WTC11 (cell line): ENCODE measurements at regions of chr1 and their contacts with region 1.

Region 1: DNA sequence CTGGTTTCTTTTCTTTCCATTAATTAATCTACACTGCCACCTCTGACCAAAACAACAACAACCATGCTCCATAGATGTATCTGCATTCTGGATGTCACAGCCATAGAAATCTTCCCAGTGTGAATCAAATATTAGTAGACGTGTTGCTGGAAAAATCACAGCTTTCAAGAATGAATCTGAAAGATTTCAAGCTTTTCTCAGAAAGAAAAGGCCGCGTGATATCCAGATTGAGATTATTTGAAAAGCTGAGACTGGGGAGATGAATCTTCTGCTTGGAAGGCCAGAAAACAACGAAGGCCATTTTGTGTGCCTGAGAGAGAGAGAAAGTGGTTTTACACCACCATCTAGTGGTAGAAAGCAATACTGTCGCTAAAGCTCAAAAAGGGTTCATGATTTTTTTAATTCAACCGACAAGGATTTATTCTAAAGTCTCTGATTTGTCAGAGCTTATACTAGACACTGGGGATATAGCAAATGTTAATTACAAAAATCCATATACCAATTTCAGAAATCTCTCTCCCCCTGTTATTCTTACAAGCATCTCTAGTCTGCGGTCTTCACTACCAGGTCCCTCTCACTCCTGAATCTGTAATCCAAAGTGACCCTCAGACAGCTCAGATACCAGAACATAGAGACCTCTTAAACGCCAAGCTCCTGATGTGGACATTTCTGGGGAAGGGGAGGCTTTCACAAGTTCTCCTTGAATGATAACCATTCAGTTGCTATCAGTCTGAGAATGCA is 87.5 kb upstream of the SGIP1 start:
- DNase-seq: no peak
- ATAC-seq: peak; percentile 71
- H3K4me3 Mint-ChIP-seq: no peak overlapping the region; the same call in 1 of the 2 replicates
- H3K27ac Mint-ChIP-seq: no peak overlapping the region
- H3K4me1 Mint-ChIP-seq: peaks cover 16% of the 10 kb centered on the region
- H3K27me3 Mint-ChIP-seq: no peaks in the 10 kb centered on the region
- CTCF ChIP-seq: peak; percentile 67; the same call in 1 of the 2 replicates

Region 2: DNA sequence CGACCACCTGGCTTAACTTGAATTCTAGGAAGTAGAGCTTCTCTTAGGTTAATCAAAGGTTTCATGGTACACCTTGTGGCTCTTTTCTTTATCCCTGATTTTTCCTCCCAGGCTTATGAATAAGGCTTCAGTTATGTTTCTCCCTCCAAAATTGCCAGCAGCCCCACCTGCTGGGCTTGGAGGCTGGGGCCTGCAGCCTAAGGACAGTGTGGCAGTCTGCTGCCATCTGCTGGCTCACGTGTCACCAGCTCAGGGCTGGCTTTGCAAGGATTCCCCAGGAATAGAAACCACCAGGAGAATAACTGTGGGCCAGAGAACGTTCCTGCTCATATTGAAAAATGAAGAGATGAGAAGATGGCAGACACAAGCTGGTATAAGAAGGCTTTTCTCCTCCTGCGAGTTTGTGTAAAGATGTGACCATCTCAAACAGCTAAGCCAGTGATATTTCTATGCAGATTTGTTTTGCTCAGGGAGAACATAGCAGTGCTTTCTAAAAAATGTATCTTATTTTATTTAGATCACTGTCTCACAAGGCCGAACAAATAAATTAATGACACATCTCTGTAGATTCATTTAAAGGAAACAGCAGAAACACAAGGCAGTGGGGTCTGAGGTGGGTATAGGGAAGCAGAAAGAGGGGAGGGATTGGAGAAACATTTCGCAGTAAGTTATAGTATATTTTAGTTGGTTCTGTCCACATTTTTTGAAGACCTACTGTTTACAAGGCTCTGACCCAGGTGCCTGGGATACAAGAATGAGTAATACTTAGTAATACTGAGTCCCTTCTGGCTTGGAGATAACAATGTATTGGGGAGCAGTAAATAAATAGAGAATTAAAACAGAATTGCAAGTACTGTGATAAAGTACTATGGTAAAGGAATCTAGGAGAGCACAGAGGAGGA is 203.5 kb before region 1 on chr1:
- CTCF ChIA-PET with region 1: interaction called, 39 read pairs
- POLR2A ChIA-PET with region 1: no interaction called
- DNase-seq: peak; percentile 83
- ATAC-seq: peak; percentile 95
- H3K4me3 Mint-ChIP-seq: no peak overlapping the region
- H3K27ac Mint-ChIP-seq: no peak overlapping the region
- H3K4me1 Mint-ChIP-seq: peaks cover 3% of the 10 kb centered on the region; the same call in 1 of the 2 replicates
- H3K27me3 Mint-ChIP-seq: no peaks in the 10 kb centered on the region
- CTCF ChIP-seq: peak; percentile 76

Region 3: DNA sequence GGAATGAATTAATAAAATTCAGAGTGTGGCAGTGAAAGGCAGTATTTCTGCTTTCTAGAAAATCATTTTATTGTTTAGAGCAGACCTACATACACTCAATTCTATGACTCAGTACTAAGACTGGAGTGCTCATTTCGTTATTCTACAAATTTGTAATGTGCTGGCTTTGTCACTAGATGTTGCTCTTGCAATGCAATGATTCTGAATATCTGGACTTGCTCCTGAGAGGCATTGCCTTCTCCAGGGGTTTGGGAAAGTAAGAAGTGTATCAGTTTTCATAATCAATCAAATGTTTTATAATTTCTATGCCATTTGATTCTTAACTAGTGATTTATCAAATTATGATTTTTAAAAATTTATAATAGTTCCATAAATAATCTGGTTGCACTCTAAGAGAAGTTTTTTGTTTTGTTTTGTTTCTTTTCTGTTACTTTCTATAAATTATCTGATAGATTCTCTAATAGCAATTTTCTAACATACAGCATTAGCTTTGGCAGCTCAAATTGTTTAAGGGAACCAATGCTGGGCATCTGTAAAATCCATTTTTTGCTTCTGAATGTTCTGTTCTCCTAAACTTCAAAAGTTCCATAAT is 193.0 kb before region 1 on chr1:
- CTCF ChIA-PET with region 1: interaction called, 52 read pairs
- POLR2A ChIA-PET with region 1: no interaction called
- DNase-seq: no peak
- ATAC-seq: peak; percentile 74
- H3K4me3 Mint-ChIP-seq: no peak overlapping the region
- H3K27ac Mint-ChIP-seq: no peak overlapping the region
- H3K4me1 Mint-ChIP-seq: peaks cover 44% of the 10 kb centered on the region
- H3K27me3 Mint-ChIP-seq: no peaks in the 10 kb centered on the region
- CTCF ChIP-seq: no peak

Region 4: DNA sequence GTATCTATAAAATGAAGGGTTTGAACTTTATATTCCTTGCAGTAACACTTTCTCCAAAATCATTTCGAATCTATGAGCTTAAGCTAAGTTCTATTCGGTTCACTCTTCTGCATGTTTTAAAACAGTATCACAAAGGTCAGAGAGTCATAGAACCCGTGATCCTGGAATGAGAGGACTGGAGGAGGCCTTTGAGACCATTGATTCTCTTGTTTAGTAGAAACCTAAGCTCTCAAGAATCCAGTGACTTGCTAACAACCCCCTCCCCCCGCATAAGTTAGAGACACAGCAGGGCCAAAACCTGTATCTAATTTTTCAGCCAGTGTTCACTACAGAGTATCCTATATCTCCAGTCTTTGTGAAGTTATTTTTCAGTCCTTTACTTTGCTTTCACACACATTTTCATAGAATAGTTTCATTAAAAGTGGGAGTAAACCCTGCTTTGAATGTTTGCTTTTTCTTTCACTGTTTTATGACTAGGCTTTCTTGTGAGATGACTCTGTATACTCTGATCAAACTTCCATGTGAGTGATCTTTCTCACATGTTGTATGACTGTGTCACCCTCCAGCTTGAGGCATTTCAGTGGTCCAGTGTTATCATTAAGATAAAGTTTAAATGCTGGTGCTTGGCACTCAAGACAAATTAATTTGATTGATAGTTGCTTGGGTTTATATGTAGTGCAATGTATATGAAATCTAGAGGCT is 187.9 kb before region 1 on chr1:
- CTCF ChIA-PET with region 1: interaction called, 26 read pairs
- POLR2A ChIA-PET with region 1: no interaction called
- DNase-seq: no peak
- ATAC-seq: peak; percentile 68
- H3K4me3 Mint-ChIP-seq: no peak overlapping the region
- H3K27ac Mint-ChIP-seq: no peak overlapping the region
- H3K4me1 Mint-ChIP-seq: peaks cover 33% of the 10 kb centered on the region
- H3K27me3 Mint-ChIP-seq: peaks cover 7% of the 10 kb centered on the region
- CTCF ChIP-seq: no peak

Region 5: GRCh38 chr1:66349242-66349641 is 97.2 kb before region 1 on chr1:
- CTCF ChIA-PET with region 1: no interaction called
- POLR2A ChIA-PET with region 1: no interaction called
- DNase-seq: no peak
- ATAC-seq: no peak
- H3K4me3 Mint-ChIP-seq: no peak overlapping the region
- H3K27ac Mint-ChIP-seq: peak overlapping the region; percentile 94
- H3K4me1 Mint-ChIP-seq: peaks cover 87% of the 10 kb centered on the region
- H3K27me3 Mint-ChIP-seq: no peaks in the 10 kb centered on the region
- CTCF ChIP-seq: no peak

Region 6: DNA sequence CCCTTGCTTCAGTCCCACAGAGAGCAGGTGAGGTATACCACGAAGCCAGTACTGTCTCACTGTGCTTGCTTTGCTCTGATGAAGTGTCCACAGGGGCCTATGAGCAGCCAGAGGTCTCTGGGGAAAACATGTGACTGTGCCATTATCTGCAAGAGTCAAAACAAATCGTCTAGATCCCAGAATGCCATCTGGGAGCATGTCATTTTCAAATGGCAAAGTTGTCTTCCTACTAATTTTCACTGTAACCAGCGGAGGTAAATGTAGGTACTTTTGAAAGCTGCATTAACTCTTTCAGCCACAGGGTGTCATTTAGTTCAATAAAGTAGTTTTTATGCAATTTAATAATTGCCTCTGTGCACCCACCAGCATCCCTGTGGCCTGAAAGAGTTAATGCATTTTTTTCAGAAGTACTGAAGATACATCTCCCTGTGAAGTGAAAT is 86.1 kb before region 1 on chr1:
- CTCF ChIA-PET with region 1: interaction called, 15 read pairs
- POLR2A ChIA-PET with region 1: no interaction called
- DNase-seq: no peak
- ATAC-seq: peak; percentile 38; the same call in 1 of the 2 replicates
- H3K4me3 Mint-ChIP-seq: no peak overlapping the region
- H3K27ac Mint-ChIP-seq: peak overlapping the region; percentile 32; the same call in 1 of the 2 replicates
- H3K4me1 Mint-ChIP-seq: peaks cover 37% of the 10 kb centered on the region
- H3K27me3 Mint-ChIP-seq: no peaks in the 10 kb centered on the region
- CTCF ChIP-seq: no peak

Region 7: DNA sequence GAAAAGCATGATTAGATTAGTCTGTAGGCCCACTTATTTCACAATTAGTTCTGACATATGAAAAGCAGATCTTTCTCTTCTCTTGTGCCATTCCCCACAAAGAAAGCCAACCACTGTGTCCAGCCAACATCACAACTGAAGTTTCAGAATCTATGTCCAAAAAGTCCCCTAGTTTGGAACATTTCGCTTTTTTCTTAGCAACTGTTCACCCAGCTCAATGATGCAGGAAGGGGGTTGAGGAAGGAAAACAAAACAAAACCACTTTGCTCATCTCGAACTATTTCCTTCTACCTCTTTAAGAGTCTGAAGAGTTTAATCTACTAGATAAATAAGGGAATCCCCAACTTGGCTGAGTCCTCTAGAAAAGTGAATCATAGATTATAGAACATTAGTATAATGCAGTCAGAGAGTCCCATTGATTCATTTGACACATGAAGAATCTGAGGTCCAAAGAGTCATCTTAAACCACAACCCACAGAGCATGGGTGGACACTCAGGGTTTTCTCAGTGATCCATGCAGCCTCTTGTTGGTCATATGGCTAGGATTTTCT is 71.8 kb before region 1 on chr1:
- CTCF ChIA-PET with region 1: interaction called, 10 read pairs
- POLR2A ChIA-PET with region 1: no interaction called
- DNase-seq: no peak
- ATAC-seq: no peak
- H3K4me3 Mint-ChIP-seq: no peak overlapping the region
- H3K27ac Mint-ChIP-seq: no peak overlapping the region
- H3K4me1 Mint-ChIP-seq: 0 out of 2 replicates have a peak, but pooled peaks cover 3% of the 10 kb centered on the region
- H3K27me3 Mint-ChIP-seq: no peaks in the 10 kb centered on the region
- CTCF ChIP-seq: no peak

Region 8: GRCh38 chr1:66503841-66504470 is 57.5 kb after region 1 on chr1:
- CTCF ChIA-PET with region 1: interaction called, 22 read pairs
- POLR2A ChIA-PET with region 1: no interaction called
- DNase-seq: peak; percentile 59
- ATAC-seq: peak; percentile 96
- H3K4me3 Mint-ChIP-seq: no peak overlapping the region
- H3K27ac Mint-ChIP-seq: no peak overlapping the region
- H3K4me1 Mint-ChIP-seq: peaks cover 5% of the 10 kb centered on the region; the same call in 1 of the 2 replicates
- H3K27me3 Mint-ChIP-seq: no peaks in the 10 kb centered on the region
- CTCF ChIP-seq: peak; percentile 60

Region 9: DNA sequence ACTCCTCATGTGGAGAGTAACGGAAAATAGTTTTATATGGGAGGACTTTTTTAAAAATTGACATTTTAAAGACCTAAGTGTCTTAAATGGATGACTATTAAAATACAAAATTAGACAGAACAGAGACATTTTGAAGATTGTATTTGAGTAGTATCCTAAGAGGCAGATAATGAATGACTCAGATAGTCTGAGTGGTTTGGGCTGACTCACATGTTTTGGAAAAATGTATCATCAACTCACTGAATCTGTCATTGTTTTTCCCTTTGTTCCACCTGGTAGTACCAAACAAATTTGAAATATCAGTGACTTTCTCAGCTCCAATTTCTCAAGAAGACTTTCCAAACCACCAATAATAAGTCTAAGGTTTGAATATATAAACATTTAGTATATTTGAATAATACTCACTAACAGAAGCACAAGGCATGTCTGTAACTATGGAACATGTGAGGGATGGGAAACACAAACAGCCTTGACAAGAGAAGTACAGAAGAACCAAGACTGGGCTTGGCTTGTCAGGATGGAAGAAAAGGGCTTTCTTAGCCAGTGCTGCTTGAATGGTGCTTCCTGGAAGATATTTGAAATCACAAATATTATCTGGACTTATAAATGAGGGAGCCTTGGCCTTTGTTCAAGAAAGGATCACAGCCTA is 178.1 kb after region 1 on chr1:
- CTCF ChIA-PET with region 1: no interaction called
- POLR2A ChIA-PET with region 1: no interaction called
- DNase-seq: no peak
- ATAC-seq: no peak
- H3K4me3 Mint-ChIP-seq: no peak overlapping the region
- H3K27ac Mint-ChIP-seq: no peak overlapping the region
- H3K4me1 Mint-ChIP-seq: no peaks in the 10 kb centered on the region
- H3K27me3 Mint-ChIP-seq: no peaks in the 10 kb centered on the region
- CTCF ChIP-seq: no peak